ENCODE measurements at regions of chr2 and their contacts with region 1.

Region 1: DNA sequence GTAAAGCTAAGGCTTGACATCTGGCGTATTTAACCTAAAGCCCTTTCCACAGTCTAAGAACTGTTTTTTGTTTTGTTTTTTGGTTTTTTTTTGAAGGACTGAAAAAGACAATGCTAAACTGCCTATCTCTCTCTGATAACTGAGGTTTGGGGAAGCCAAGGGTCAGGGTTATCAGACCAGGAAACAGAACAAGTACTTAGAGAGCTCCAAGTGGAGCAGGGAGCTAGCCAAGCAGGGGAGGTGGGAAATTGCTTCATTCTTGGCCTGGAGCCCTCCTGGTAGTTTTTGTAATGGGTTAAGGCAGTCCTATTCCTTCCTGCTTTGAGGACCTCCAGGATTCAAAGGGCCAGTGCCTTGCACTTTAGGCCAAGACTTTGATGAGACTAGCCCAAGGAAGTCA is 154.3 kb upstream of the LTBP1 start:
- DNase-seq: peak; percentile 95
- H3K4me3 ChIP-seq: no peak overlapping the region
- H3K27ac ChIP-seq: peak overlapping the region; percentile 9
- H3K4me1 ChIP-seq: peaks cover 23% of the 10 kb centered on the region
- H3K27me3 ChIP-seq: no peaks in the 10 kb centered on the region
- CTCF ChIP-seq: no peak
- POLR2A ChIP-seq: no peak

Region 2: DNA sequence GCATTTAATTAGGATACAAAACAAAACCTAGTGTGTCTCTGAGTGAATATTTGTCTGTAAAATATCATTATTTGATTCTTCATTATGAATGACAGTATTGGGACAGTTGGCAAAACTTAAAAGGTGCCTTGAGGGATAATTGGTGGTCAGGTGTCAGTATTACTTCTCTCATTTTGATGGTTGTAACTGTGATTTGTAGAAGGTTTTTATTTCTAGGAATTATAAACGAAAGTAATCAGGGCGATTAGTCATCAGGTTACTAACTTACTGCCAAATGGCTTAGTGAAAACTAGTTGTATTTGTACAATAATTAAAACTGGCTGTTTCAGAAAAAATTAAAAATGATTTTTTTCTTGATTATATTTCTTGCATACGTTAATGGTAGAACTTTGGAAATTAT is 318.0 kb before region 1 on chr2:
- CTCF ChIA-PET with region 1: no interaction called
- POLR2A ChIA-PET with region 1: no interaction called
- dilution Hi-C with region 1: no loop called
- intact Hi-C with region 1: no loop called
- DNase-seq: no peak
- H3K4me3 ChIP-seq: no peak overlapping the region
- H3K27ac ChIP-seq: no peak overlapping the region
- H3K4me1 ChIP-seq: no peaks in the 10 kb centered on the region
- H3K27me3 ChIP-seq: no peaks in the 10 kb centered on the region
- CTCF ChIP-seq: no peak
- POLR2A ChIP-seq: no peak

Region 3: GRCh38 chr2:32926708-32927084 is 134.3 kb after region 1 on chr2:
- CTCF ChIA-PET with region 1: interaction called, 5 read pairs
- POLR2A ChIA-PET with region 1: no interaction called
- dilution Hi-C with region 1: no loop called
- intact Hi-C with region 1: loop called (anchors 2 kb)
- DNase-seq: peak; percentile 96
- H3K4me3 ChIP-seq: no peak overlapping the region
- H3K27ac ChIP-seq: no peak overlapping the region
- H3K4me1 ChIP-seq: peaks cover 2% of the 10 kb centered on the region
- H3K27me3 ChIP-seq: peaks cover 0 to 15% of the 10 kb centered on the region in 2 experiments
- CTCF ChIP-seq: no peak
- POLR2A ChIP-seq: no peak

Region 4: DNA sequence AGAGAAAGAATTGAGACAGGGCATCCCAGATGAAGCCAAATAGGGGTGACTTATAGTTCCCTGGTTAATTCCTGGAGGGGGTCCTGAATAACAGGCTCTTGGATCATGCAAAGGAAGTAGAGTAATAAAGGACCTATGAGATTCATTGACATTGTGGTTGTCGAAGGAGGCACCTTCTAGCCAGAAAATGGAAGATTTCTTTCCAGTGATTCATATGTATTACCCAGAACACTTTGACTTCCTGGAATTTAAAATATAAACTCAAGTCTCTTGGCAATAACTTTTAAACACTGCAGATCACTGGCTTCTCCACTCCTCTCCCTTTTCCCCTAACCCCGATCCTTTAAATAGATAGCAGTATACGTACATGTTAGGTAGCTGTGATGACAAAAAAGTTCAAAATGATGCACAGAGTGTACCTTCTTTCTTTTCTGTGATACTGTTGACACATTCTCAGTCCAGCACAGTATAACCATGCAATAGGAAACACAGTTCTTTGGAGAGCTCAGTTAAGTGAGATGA is 366.1 kb after region 1 on chr2:
- CTCF ChIA-PET with region 1: no interaction called
- POLR2A ChIA-PET with region 1: no interaction called
- dilution Hi-C with region 1: no loop called
- intact Hi-C with region 1: no loop called
- DNase-seq: peak; percentile 85
- H3K4me3 ChIP-seq: no peak overlapping the region
- H3K27ac ChIP-seq: peak overlapping the region; percentile 88
- H3K4me1 ChIP-seq: peaks cover 19% of the 10 kb centered on the region
- H3K27me3 ChIP-seq: no peaks in the 10 kb centered on the region
- CTCF ChIP-seq: no peak
- POLR2A ChIP-seq: peak; percentile 34

Measured in endothelial cell of umbilical vein (primary cell).